BJ (cell line): ENCODE measurements at regions of chr1 and their contacts with region 1.

Region 1: DNA sequence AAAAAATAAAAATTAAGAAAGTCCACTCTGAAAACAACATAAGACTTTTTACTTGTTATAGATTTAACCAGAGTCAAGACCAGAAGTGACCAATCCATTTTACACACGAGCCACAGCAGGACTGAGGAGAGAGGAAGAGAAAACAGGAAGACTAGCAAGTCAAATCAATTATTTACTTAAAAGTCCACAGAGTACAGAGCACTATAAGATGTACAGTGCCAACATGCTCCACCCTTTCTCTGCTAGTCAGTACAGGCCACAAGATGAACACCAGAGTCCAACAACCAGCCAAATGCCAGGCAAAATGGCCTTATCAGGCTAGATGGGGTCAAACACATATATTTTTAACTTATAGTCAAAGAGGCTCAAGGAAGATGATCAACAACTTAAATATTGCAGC is 19.5 kb downstream of the LUZP1 start:
- DNase-seq: no peak
- H3K4me3 ChIP-seq: no peak overlapping the region
- H3K27me3 ChIP-seq: no peaks in the 10 kb centered on the region
- CTCF ChIP-seq: no peak

Region 2: DNA sequence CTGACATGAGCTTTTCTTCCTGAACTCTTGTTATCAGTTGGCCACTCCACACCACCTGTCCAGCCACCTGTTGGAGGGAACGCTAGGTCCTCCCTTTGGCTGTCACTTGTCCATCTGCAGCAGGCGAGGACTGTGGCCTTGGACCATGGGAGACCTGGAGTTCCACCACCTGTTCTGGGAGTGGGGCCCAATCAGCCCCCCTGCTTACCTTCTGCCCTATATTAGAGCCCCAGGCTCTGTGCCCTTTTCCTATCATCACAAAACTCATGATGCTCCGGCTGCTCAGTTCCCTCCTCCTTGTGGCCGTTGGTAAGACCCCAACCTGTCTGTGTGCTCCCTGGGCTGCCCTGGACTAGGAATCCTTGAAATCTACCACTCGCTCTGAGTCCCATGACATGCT is 1147.7 kb before region 1 on chr1 and contains the start of gene CELA3A:
- CTCF ChIA-PET with region 1: no interaction called
- POLR2A ChIA-PET with region 1: interaction called, 12 read pairs
- DNase-seq: no peak
- H3K4me3 ChIP-seq: no peak within 1 kb of the TSS
- H3K27me3 ChIP-seq: no peaks in the 10 kb centered on the region
- CTCF ChIP-seq: no peak
- polyA plus RNA-seq, gene CELA3A: not detected in 2 replicates

Region 3: DNA sequence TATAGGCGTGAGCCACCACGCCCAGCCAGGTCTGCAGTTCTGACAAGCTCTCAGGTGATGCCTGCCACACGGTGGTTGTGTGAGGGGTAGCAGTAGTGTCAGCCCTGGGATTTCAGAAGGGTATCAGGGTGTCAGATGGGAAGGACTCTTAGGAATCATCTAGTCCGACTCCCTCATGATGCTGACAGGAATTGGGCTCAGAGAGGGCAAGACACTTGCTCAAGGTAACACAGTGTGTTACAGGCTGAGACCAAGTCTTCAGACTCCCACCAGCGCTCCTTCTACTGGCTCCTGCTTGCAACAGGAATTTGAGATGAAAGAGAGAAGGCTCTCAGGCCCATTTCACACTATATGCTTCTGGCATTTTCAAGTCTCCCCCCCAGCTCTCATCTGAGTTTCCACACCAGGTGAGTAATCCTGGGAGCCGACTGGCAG is 61.3 kb after region 1 on chr1:
- CTCF ChIA-PET with region 1: no interaction called
- POLR2A ChIA-PET with region 1: no interaction called
- DNase-seq: no peak
- H3K4me3 ChIP-seq: no peak overlapping the region
- H3K27me3 ChIP-seq: peaks cover 12% of the 10 kb centered on the region
- CTCF ChIP-seq: no peak